ENCODE measurements at regions of chr15 and their contacts with region 1.

Region 1: DNA sequence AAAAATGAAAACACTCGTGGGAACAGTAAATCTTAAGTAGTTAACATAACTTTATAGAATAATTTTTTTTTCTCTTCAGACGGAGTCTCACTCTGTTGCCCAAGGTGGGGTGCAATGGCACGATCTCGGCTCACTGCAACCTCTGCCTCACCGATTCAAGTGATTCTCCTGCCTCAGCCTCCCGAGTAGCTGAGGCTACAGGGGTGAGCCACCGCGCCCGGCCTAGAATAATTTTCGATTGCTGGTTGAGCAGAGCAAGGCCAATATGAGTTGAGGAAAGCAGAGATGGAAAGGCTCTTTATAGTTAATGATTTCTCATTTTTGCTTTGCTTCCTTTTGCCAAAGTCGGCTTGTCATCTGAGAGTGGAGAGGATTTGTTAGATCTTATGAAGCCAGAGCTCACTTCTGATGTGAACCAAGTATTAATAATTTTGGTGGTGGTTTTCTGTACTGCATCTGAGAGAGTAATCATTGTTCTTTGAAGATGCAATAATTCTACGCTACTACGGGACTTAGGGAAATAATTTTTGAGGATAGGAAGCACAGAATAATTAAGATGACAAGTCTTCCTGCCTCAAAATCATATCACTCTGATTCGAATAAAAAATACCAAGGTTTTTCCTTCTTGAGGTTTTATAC is 1.6 kb upstream of the GOLM2 start:
- DNase-seq: no peak
- H3K4me3 ChIP-seq: no peak overlapping the region
- H3K27ac ChIP-seq: peak overlapping the region in 2 of 3 donors; percentile 82 to 96
- H3K4me1 ChIP-seq: peaks cover 16 to 21% of the 10 kb centered on the region in 2 donors
- H3K27me3 ChIP-seq: no peaks in the 10 kb centered on the region
- CTCF ChIP-seq: no peak
- POLR2A ChIP-seq: no peak

Region 2: GRCh38 chr15:44397869-44398268 is 110.9 kb after region 1 on chr15:
- intact Hi-C with region 1: no loop called
- DNase-seq: no peak
- H3K4me3 ChIP-seq: no peak overlapping the region
- H3K27ac ChIP-seq: no peak overlapping the region
- H3K4me1 ChIP-seq: no peaks in the 10 kb centered on the region
- H3K27me3 ChIP-seq: no peaks in the 10 kb centered on the region
- CTCF ChIP-seq: no peak
- POLR2A ChIP-seq: no peak

Region 3: GRCh38 chr15:44426975-44427755 is 140.2 kb after region 1 on chr15 and contains the start of gene CTDSPL2:
- intact Hi-C with region 1: loop called (anchors 5 kb)
- DNase-seq: peak; percentile 99
- H3K4me3 ChIP-seq: peak within 1 kb of the TSS; percentile 33 to 88 (median 64)
- H3K27ac ChIP-seq: peak within 1 kb of the TSS; percentile 90 to 96 (median 92)
- H3K4me1 ChIP-seq: peaks cover 22 to 25% of the 10 kb centered on the region in 2 donors
- H3K27me3 ChIP-seq: no peaks in the 10 kb centered on the region
- CTCF ChIP-seq: peak in 3 of 6 experiments; percentile 16 to 39 (median 37)
- POLR2A ChIP-seq: peak in 1 of 2 donors; percentile 62
- total RNA-seq, gene CTDSPL2: 26.7 to 71.4 (median 53.5) TPM

Region 4: GRCh38 chr15:44482088-44482487 is 195.2 kb after region 1 on chr15:
- intact Hi-C with region 1: no loop called
- DNase-seq: no peak
- H3K4me3 ChIP-seq: no peak overlapping the region
- H3K27ac ChIP-seq: no peak overlapping the region
- H3K4me1 ChIP-seq: no peaks in the 10 kb centered on the region
- H3K27me3 ChIP-seq: no peaks in the 10 kb centered on the region
- CTCF ChIP-seq: no peak
- POLR2A ChIP-seq: no peak

Region 5: DNA sequence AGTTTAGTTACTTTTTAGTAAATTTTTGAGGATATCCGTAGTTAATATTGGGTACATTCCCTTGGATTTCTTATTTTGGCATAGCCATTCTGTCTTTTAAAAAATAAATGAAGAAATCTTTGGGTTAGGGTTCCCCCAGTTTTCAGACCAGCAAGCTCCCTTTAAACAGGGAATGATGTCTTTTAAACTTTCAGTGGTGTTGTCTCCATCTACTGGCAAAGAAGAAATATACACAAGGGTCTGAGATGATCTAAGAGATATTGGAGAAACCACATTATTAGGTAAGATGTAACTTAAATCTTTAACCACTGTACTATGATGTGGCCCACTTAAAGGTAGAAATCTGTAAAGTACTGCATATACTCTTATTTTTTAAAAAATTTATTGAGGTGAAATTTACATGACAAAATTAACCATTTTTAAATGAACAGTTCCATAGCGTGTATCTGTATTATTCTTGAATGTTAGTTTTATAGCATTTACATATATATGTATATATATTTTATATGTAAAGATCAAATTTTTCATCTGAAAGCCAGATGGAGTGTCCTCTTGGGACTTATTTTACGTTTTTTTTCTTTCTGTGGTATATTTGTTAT is 214.9 kb after region 1 on chr15:
- intact Hi-C with region 1: no loop called
- DNase-seq: no peak
- H3K4me3 ChIP-seq: no peak overlapping the region
- H3K27ac ChIP-seq: no peak overlapping the region
- H3K4me1 ChIP-seq: peaks cover 0 to 4% of the 10 kb centered on the region in 2 donors
- H3K27me3 ChIP-seq: no peaks in the 10 kb centered on the region
- CTCF ChIP-seq: peak in 5 of 6 experiments; percentile 17 to 66 (median 59)
- POLR2A ChIP-seq: no peak

Region 6: DNA sequence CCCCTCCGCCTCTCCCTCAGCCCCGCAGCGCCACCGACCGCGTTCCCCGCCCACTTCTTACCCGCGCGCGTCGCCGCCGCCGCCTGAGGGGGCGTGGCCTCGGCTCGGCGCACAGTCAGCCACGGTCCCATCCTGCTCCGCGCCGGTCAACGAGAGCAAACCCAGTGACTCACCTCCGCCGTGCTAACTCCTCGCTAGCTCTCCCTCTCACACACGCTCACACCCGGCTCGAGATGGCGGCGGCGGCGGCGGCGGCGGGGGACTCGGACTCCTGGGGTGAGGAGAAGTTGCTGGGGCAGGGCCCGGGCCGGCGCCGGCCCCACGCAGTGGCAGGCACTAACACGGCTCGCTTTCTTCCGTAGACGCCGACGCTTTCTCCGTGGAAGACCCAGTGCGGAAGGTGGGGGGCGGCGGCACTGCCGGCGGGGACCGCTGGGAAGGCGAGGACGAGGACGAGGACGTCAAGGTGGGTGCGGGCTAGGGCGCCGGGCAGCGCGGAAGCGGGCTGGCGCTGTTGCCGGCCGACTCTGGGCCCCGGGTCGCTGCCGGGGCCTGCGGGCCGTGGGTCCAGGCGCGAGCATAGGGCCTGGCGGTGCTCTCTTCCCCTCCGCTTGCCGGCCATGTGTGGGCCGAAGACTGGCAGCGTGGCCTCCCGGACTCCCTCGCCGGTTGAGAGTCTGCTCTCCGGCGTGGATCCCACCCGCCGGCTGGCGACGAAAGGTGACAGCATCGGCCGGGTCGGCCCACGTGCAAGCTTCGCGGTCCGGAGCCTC is 250.2 kb after region 1 on chr15 and contains the start of gene EIF3J:
- intact Hi-C with region 1: loop called (anchors 10 kb)
- DNase-seq: peak; percentile 96
- H3K4me3 ChIP-seq: peak within 1 kb of the TSS; percentile 89 to 94 (median 92)
- H3K27ac ChIP-seq: peak within 1 kb of the TSS; percentile 89 to 99 (median 94)
- H3K4me1 ChIP-seq: peaks cover 17 to 27% of the 10 kb centered on the region in 2 donors
- H3K27me3 ChIP-seq: no peaks in the 10 kb centered on the region
- CTCF ChIP-seq: no peak
- POLR2A ChIP-seq: peak; percentile 45 to 88
- total RNA-seq, gene EIF3J: 36.7 to 50.7 (median 39.3) TPM